ENCODE measurements at regions of chr18 and their contacts with region 1.

Region 1: GRCh38 chr18:76492669-76493212 is 2.3 kb downstream of the ZNF516 start:
- DNase-seq: peak; percentile 95
- H3K4me3 ChIP-seq: peak overlapping the region; percentile 70
- H3K27ac ChIP-seq: peak overlapping the region; percentile 63
- H3K4me1 ChIP-seq: peaks cover 14% of the 10 kb centered on the region
- H3K27me3 ChIP-seq: no peaks in the 10 kb centered on the region
- CTCF ChIP-seq: no peak

Region 2: DNA sequence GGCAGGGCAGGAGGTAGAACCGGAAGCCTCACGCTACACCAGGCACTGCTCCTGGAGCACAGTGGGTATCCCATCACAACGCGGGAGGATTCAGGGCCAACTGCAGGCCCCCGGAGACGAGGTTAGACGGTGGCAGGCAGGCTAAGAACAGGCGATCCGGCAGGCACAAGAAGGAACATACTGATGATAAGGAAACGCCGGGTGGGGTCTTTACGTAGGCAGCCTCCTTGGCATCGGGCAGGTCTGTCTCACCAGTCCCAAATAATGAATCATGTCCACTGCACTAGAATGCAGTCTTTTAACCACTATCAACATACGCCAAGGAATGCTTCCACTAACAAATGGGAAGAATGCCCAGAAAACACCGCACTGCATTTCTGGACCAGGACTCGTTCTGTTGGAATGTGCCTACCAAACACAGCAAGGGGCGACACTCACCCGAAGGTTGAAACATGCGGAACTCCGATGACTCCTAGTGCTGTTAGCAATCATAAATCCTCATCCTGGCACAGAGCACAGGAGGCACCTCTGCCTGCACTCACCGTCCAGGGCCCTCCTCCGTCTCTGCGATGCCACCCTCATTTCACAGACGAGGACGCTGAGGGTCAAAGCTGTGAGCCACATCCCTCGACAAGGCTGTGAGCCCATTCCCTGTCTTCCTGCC is 32.9 kb before region 1 on chr18:
- CTCF ChIA-PET with region 1: no interaction called
- POLR2A ChIA-PET with region 1: no interaction called
- intact Hi-C with region 1: loop called (anchors 1 kb)
- DNase-seq: peak; percentile 78
- H3K4me3 ChIP-seq: no peak overlapping the region
- H3K27ac ChIP-seq: 0 out of 2 replicates have a peak overlapping the region, but pooled peaks have one; percentile 18
- H3K4me1 ChIP-seq: no peaks in the 10 kb centered on the region; the same call in 1 of the 2 replicates
- H3K27me3 ChIP-seq: no peaks in the 10 kb centered on the region
- CTCF ChIP-seq: no peak

Region 3: GRCh38 chr18:76476665-76477561 is 15.8 kb before region 1 on chr18:
- CTCF ChIA-PET with region 1: no interaction called
- POLR2A ChIA-PET with region 1: no interaction called
- intact Hi-C with region 1: loop called (anchors 1 kb)
- DNase-seq: peak; percentile 52 to 98
- H3K4me3 ChIP-seq: peak overlapping the region; percentile 46
- H3K27ac ChIP-seq: peak overlapping the region; percentile 94
- H3K4me1 ChIP-seq: peaks cover 51% of the 10 kb centered on the region
- H3K27me3 ChIP-seq: no peaks in the 10 kb centered on the region
- CTCF ChIP-seq: no peak

Region 4: GRCh38 chr18:76528477-76529432 is 36.0 kb after region 1 on chr18:
- CTCF ChIA-PET with region 1: interaction called, 3 read pairs
- POLR2A ChIA-PET with region 1: no interaction called
- intact Hi-C with region 1: loop called (anchors 2 kb)
- DNase-seq: peak; percentile 13 to 43
- H3K4me3 ChIP-seq: peak overlapping the region; percentile 49
- H3K27ac ChIP-seq: no peak overlapping the region
- H3K4me1 ChIP-seq: peaks cover 35% of the 10 kb centered on the region
- H3K27me3 ChIP-seq: no peaks in the 10 kb centered on the region
- CTCF ChIP-seq: no peak

Region 5: GRCh38 chr18:76558881-76559678 is 66.3 kb after region 1 on chr18:
- CTCF ChIA-PET with region 1: no interaction called
- POLR2A ChIA-PET with region 1: no interaction called
- intact Hi-C with region 1: loop called (anchors 2 kb)
- DNase-seq: peak; percentile 78 to 95
- H3K4me3 ChIP-seq: peak overlapping the region; percentile 51; the same call in 1 of the 2 replicates
- H3K27ac ChIP-seq: peak overlapping the region; percentile 90
- H3K4me1 ChIP-seq: peaks cover 52% of the 10 kb centered on the region
- H3K27me3 ChIP-seq: no peaks in the 10 kb centered on the region
- CTCF ChIP-seq: no peak

Region 6: DNA sequence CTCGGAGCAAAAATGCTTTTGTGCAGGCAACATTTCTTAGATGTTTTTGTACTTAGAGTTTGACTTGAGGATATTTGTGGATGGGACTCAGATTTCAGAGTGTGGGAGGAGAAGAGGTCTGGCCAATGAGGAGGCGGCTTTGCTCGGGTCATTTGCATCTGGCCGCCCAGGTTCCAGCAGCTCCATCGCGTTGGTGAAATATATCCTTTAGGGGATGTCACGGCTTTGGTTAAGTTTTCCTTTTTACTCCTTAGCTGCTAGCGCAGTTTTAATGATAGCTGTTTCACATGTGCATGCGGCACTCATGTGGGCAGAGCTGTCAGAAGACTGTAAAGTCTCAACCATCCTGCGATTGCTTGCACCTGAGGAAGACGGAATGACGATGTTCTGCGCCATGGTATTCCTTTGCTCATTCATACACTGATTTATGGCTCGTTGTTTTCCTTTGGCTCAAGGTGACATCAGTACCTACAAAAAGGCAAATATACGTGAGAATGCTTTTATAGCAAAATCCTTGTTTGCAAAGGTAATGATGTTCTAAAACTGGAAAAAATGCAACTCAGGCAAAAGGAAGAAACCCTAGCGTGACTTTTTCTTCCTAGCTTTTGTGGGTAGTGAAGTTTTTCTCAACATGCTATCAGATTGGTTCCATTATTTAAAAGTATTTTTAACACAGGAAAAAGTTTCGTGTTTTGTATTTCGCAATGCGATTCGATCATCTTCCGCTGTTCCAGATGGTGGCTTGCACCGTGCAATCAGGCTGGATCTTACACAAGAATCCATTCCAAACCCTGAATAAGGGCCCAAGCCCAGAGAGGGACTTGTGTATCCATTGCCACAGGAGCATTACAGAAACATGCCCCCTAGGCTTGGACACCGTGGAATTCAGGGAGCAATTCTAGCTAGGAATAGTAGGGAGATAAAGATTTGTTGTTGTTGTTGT is 72.8 kb after region 1 on chr18:
- CTCF ChIA-PET with region 1: interaction called, 4 read pairs
- POLR2A ChIA-PET with region 1: no interaction called
- intact Hi-C with region 1: loop called (anchors 2 kb)
- DNase-seq: peak; percentile 75 to 92
- H3K4me3 ChIP-seq: peak overlapping the region; percentile 63
- H3K27ac ChIP-seq: peak overlapping the region; percentile 99
- H3K4me1 ChIP-seq: peaks cover 36% of the 10 kb centered on the region
- H3K27me3 ChIP-seq: no peaks in the 10 kb centered on the region
- CTCF ChIP-seq: no peak

Region 7: GRCh38 chr18:76686737-76687262 is 194.1 kb after region 1 on chr18:
- CTCF ChIA-PET with region 1: no interaction called
- POLR2A ChIA-PET with region 1: no interaction called
- intact Hi-C with region 1: loop called (anchors 5 kb)
- DNase-seq: peak; percentile 26 to 48
- H3K4me3 ChIP-seq: peak overlapping the region; percentile 1; the same call in 1 of the 2 replicates
- H3K27ac ChIP-seq: peak overlapping the region; percentile 23
- H3K4me1 ChIP-seq: peaks cover 13% of the 10 kb centered on the region
- H3K27me3 ChIP-seq: peaks cover 31% of the 10 kb centered on the region
- CTCF ChIP-seq: peak; percentile 79

Measured in PC-9 (cell line).